CD4-positive, alpha-beta T cell (primary cell): ENCODE measurements at regions of chr16 and their contacts with region 1.

Region 1: DNA sequence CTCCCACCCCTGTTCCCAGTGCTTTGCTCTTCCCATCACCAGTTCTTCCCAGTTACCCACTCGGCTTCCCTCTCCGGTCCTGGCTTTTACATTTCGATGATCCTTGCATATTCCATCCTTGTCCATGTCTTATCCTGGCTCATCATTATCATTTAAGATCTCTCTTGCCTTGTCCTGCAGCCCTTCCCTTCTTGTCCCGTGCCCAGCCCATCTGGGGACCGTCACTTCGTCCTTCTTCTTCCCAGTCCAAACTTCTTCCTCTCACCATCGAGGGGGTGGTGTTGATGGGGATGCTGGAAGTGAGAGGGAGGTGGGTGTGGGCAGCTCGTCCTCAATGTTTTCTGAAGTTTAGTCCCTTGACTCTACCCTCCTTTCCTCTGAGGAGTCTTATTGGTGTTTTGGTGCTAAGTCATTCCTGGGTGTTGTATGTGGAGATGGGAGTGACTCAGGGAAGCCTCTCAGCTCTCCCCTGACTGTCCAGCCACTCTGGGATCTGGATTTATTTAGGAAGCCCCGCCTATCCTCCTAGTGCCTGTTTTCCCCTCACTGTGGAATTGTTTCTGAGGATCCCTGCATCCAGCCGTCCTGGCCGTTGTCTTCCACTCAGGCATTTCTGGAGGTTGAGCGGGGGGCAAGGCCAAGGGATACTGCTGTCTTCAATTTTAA is 975 bp downstream of the SNX29 start:
- DNase-seq: peak in 2 of 14 experiments; percentile 7 to 9
- ATAC-seq: no peak
- H3K4me3 ChIP-seq: peak overlapping the region; percentile 99
- H3K4me3 Mint-ChIP-seq: peak overlapping the region; percentile 96
- H3K27ac ChIP-seq: no peak overlapping the region
- H3K27ac Mint-ChIP-seq: peak overlapping the region; percentile 81
- H3K4me1 ChIP-seq: peaks cover 25% of the 10 kb centered on the region
- H3K4me1 Mint-ChIP-seq: peaks cover 40% of the 10 kb centered on the region
- H3K27me3 ChIP-seq: no peaks in the 10 kb centered on the region
- H3K27me3 Mint-ChIP-seq: no peaks in the 10 kb centered on the region
- CTCF ChIP-seq: no peak

Region 2: GRCh38 chr16:10944249-10945064 is 1033.1 kb before region 1 on chr16 and contains the start of gene CLEC16A:
- CTCF ChIA-PET with region 1: no interaction called
- POLR2A ChIA-PET with region 1: no interaction called
- intact Hi-C with region 1: loop called in 1 of 2 experiments (anchors 5 kb)
- DNase-seq: peak; percentile 89 to 98 (median 95)
- ATAC-seq: peak; percentile 76
- H3K4me3 ChIP-seq: peak within 1 kb of the TSS; percentile 85
- H3K4me3 Mint-ChIP-seq: peak within 1 kb of the TSS; percentile 96
- H3K27ac ChIP-seq: peak within 1 kb of the TSS in 1 of 2 donors; percentile 55
- H3K27ac Mint-ChIP-seq: peak within 1 kb of the TSS; percentile 76
- H3K4me1 ChIP-seq: peaks cover 73% of the 10 kb centered on the region
- H3K4me1 Mint-ChIP-seq: peaks cover 73% of the 10 kb centered on the region
- H3K27me3 ChIP-seq: no peaks in the 10 kb centered on the region
- H3K27me3 Mint-ChIP-seq: no peaks in the 10 kb centered on the region
- CTCF ChIP-seq: no peak
- total RNA-seq, gene CLEC16A: 21.7 to 22.7 TPM

Region 3: GRCh38 chr16:11734653-11735043 is 242.9 kb before region 1 on chr16:
- CTCF ChIA-PET with region 1: no interaction called
- POLR2A ChIA-PET with region 1: no interaction called
- intact Hi-C with region 1: loop called in 1 of 2 experiments (anchors 5 kb)
- DNase-seq: no peak
- ATAC-seq: no peak
- H3K4me3 ChIP-seq: no peak overlapping the region
- H3K4me3 Mint-ChIP-seq: no peak overlapping the region
- H3K27ac ChIP-seq: no peak overlapping the region
- H3K27ac Mint-ChIP-seq: no peak overlapping the region
- H3K4me1 ChIP-seq: peaks cover 20% of the 10 kb centered on the region
- H3K4me1 Mint-ChIP-seq: peaks cover 72% of the 10 kb centered on the region
- H3K27me3 ChIP-seq: no peaks in the 10 kb centered on the region
- H3K27me3 Mint-ChIP-seq: no peaks in the 10 kb centered on the region
- CTCF ChIP-seq: no peak

Region 4: GRCh38 chr16:11871193-11871592 is 106.3 kb before region 1 on chr16:
- CTCF ChIA-PET with region 1: no interaction called
- POLR2A ChIA-PET with region 1: no interaction called
- intact Hi-C with region 1: loop called in 1 of 2 experiments (anchors 10 kb)
- DNase-seq: peak in 1 of 14 experiments; percentile 15
- ATAC-seq: no peak
- H3K4me3 ChIP-seq: no peak overlapping the region
- H3K4me3 Mint-ChIP-seq: no peak overlapping the region
- H3K27ac ChIP-seq: no peak overlapping the region
- H3K27ac Mint-ChIP-seq: peak overlapping the region; percentile 62
- H3K4me1 ChIP-seq: no peaks in the 10 kb centered on the region
- H3K4me1 Mint-ChIP-seq: peaks cover 6% of the 10 kb centered on the region
- H3K27me3 ChIP-seq: no peaks in the 10 kb centered on the region
- H3K27me3 Mint-ChIP-seq: no peaks in the 10 kb centered on the region
- CTCF ChIP-seq: no peak

Region 5: DNA sequence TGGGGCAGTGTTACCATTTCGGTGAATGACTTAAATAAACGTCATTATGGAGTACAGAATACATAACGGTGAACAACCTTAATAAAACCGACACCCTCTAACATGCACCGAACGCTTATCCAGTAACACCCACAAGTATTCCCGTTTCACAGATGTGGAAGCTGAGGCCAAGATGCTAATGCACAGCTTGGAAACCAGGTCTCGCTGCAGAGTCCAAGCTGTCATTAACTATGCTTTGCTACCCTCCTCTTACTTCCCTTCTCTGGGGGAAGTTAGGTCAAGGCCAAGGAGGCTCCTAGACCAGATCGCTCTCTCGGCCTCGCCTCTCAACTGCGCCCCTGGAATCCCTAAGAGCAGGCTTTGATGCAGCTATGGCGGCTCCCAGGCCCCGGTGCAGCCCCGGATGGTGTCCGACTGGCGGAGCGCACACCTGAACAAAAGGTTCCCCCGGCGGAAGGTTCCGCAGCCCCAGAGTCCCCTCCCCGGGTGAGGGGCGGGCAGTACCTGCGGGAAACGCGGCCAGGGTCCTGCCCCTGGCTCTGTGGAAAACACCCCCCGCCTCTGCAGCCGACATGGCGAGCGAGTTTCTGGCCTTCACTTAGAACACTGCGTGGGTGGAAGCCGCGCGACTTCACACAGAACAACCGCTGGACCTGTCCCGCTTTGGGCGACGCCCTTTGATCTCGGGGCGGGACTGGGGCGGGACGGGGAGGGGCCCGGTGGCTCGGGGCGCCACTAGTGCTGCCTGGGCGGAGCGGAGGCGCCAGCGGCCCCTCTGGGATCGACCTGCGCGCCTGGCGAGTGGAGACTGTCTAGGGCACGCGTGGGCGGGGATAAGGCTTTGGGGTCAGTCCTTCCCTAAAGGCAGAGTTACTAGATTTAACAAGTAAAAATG is 825.9 kb after region 1 on chr16 and contains the start of gene CPPED1:
- CTCF ChIA-PET with region 1: no interaction called
- POLR2A ChIA-PET with region 1: no interaction called
- intact Hi-C with region 1: loop called in 1 of 2 experiments (anchors 2 kb)
- DNase-seq: peak; percentile 82 to 95 (median 88)
- ATAC-seq: peak; percentile 95
- H3K4me3 ChIP-seq: peak within 1 kb of the TSS; percentile 83
- H3K4me3 Mint-ChIP-seq: peak within 1 kb of the TSS; percentile 93
- H3K27ac ChIP-seq: peak within 1 kb of the TSS; percentile 71 to 80
- H3K27ac Mint-ChIP-seq: peak within 1 kb of the TSS; percentile 87
- H3K4me1 ChIP-seq: peaks cover 17% of the 10 kb centered on the region
- H3K4me1 Mint-ChIP-seq: peaks cover 23% of the 10 kb centered on the region
- H3K27me3 ChIP-seq: no peaks in the 10 kb centered on the region
- H3K27me3 Mint-ChIP-seq: no peaks in the 10 kb centered on the region
- CTCF ChIP-seq: no peak
- total RNA-seq, gene CPPED1: 1.4 to 2.3 TPM